ENCODE measurements at regions of chr19 and their contacts with region 1.

Region 1: DNA sequence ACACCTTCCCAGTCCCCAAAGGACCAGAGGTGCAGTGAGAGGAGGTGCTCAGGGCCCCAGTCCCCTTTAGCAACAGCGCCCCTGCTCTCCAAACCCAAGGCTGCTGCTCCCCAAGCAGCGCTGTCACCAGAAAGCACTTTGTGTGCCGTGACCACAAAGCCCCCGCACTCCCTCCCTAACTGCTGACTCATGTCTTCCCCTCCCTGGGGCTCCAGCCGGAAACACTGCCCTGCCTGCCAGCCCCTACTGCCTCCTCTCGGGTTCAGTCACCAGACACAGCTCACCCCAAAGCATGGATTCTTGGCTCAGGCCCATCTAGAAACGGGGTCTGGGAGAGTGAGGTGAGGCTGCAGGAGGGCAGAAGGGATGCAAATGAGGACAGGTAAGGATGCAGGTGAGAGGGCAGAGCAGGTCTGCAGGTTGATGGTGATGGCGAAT is 4.9 kb upstream of the TNFSF14 start:
- DNase-seq: peak; percentile 87
- ATAC-seq: peak; percentile 75
- H3K4me3 ChIP-seq: peak overlapping the region; percentile 40; the same call in 1 of the 2 replicates
- H3K27ac ChIP-seq: peak overlapping the region; percentile 69
- H3K4me1 ChIP-seq: peaks cover 35% of the 10 kb centered on the region
- H3K27me3 ChIP-seq: no peaks in the 10 kb centered on the region
- CTCF ChIP-seq: peak in 2 of 3 experiments; percentile 30 to 36; a peak in 4 of 6 replicates
- EP300 ChIP-seq: peak; percentile 75 to 83
- POLR2A ChIP-seq: 0 out of 2 replicates have a peak, but pooled peaks have one; percentile 37
- RAD21 ChIP-seq: peak; percentile 23; the same call in 1 of the 2 replicates

Region 2: DNA sequence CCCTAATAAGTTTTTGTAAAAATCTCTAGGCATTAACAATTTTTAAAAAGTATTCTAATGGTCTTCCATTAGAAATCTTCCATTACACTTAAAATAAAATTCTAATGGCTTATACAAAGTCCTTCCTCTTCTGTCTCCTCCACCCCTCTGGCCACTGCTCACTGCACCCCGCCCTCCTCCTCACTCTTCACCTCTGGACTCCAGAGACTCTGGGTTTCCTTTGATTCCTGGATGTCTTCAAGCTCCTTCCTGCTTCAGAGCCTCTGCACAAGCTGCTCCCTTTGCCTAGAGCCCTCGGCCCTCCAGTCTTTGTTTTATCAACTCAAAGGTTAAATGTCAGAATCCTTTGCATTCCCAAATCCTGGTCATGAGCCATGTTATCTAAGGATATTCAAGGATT is 25.7 kb before region 1 on chr19:
- CTCF ChIA-PET with region 1: interaction called, 16 read pairs
- POLR2A ChIA-PET with region 1: interaction called, 22 read pairs
- RAD21 ChIA-PET with region 1: interaction called, 23 read pairs
- SMC1A ChIA-PET with region 1: interaction called, 9 read pairs
- in situ Hi-C with region 1: no loop called
- intact Hi-C with region 1: no loop called
- DNase-seq: no peak
- ATAC-seq: no peak
- H3K4me3 ChIP-seq: no peak overlapping the region
- H3K27ac ChIP-seq: no peak overlapping the region
- H3K4me1 ChIP-seq: peaks cover 6% of the 10 kb centered on the region
- H3K27me3 ChIP-seq: no peaks in the 10 kb centered on the region
- CTCF ChIP-seq: no peak
- EP300 ChIP-seq: no peak
- POLR2A ChIP-seq: no peak
- RAD21 ChIP-seq: no peak

Region 3: DNA sequence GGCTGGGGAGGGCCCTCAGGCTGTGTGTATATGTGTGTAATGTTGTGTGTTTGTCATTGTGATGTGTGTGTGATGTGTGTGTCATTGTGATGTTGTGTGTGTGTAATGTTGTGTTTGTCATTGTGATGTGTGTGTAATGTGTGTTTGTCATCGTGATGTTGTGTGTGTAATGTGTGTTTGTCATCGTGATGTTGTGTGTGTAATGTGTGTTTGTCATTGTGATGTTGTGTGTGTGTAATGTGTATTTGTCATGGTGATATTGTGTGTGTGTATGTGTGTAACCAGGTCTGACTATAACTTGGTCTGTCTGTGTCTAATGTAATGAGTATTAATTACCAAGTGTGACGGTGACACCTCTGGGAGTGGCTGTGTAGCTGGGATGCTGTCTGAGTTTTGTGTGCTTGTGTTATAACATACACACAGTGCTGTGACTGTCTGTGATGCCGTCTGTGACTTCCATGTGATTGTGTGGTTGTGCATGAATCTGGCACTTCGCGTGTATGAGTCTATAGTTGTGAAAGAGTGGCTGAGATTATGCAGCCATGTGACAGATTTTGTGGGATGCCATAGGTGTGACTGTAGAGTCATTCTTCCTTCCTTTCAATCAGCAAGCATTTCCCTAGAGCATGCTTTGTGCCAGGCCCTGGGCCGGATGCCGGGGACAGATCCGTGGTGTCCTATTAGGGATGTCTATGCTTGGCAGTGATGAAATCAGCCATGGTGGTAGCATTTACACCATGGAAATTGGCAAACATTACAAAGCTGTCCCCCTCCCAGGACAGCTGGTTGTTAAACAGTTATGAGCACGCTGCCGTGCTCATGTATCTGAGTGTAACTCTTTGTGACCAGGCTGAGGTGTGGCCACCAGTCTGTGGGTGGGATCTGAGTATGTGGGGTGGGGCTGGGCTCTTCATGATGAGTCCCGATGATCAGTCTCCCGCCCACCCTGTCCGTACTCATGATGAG is 11.4 kb before region 1 on chr19:
- CTCF ChIA-PET with region 1: interaction called, 5 read pairs
- POLR2A ChIA-PET with region 1: interaction called, 10 read pairs
- RAD21 ChIA-PET with region 1: interaction called, 15 read pairs
- SMC1A ChIA-PET with region 1: interaction called, 10 read pairs
- in situ Hi-C with region 1: no loop called
- intact Hi-C with region 1: no loop called
- DNase-seq: no peak
- ATAC-seq: peak; percentile 8; the same call in 2 of the 3 replicates
- H3K4me3 ChIP-seq: no peak overlapping the region
- H3K27ac ChIP-seq: peak overlapping the region; percentile 40; the same call in 1 of the 2 replicates
- H3K4me1 ChIP-seq: peaks cover 26% of the 10 kb centered on the region
- H3K27me3 ChIP-seq: no peaks in the 10 kb centered on the region
- CTCF ChIP-seq: no peak
- EP300 ChIP-seq: no peak
- POLR2A ChIP-seq: no peak; the same call in 1 of the 2 replicates
- RAD21 ChIP-seq: no peak

Region 4: GRCh38 chr19:7197760-7198696 is 523.1 kb after region 1 on chr19:
- CTCF ChIA-PET with region 1: no interaction called
- POLR2A ChIA-PET with region 1: no interaction called
- RAD21 ChIA-PET with region 1: no interaction called
- SMC1A ChIA-PET with region 1: no interaction called
- in situ Hi-C with region 1: no loop called
- intact Hi-C with region 1: no loop called
- DNase-seq: peak; percentile 81
- ATAC-seq: peak; percentile 89
- H3K4me3 ChIP-seq: peak overlapping the region; percentile 70
- H3K27ac ChIP-seq: peak overlapping the region; percentile 75
- H3K4me1 ChIP-seq: peaks cover 17% of the 10 kb centered on the region
- H3K27me3 ChIP-seq: no peaks in the 10 kb centered on the region
- CTCF ChIP-seq: peak in 2 of 3 experiments; percentile 26 to 34; a peak in 2 of 6 replicates
- EP300 ChIP-seq: peak; percentile 16 to 52; a peak in 1 of 4 replicates
- POLR2A ChIP-seq: peak; percentile 80
- RAD21 ChIP-seq: peak; percentile 17; the same call in 1 of the 2 replicates